ENCODE measurements at regions of chr17 and their contacts with region 1.

Region 1: DNA sequence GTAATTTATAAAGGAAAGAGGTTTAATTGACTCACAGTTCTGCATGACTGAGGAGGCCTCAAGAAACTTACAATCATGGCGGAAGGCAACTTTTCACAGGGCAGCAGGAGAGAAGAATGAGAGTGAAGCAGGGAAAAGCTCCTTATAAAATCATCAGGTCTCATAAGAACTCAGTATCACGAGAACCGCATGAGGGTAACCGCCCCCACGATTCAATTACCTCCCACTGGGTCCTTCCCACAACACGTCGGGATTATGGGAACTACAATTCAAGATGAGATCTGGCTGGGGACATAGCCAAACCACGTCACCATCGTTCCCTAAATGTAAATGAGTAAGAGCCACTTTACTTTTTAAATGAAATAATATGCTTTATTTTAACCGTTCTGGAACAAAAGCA is 89.9 kb upstream of the NACA2 start:
- DNase-seq: no peak
- ATAC-seq: no peak
- H3K4me3 ChIP-seq: no peak overlapping the region
- H3K27ac ChIP-seq: no peak overlapping the region
- H3K4me1 ChIP-seq: no peaks in the 10 kb centered on the region
- H3K27me3 ChIP-seq: no peaks in the 10 kb centered on the region
- CTCF ChIP-seq: no peak

Region 2: GRCh38 chr17:61486135-61487120 is 194.5 kb before region 1 on chr17:
- CTCF ChIA-PET with region 1: no interaction called
- POLR2A ChIA-PET with region 1: no interaction called
- in situ Hi-C with region 1: no loop called
- intact Hi-C with region 1: no loop called
- DNase-seq: no peak
- ATAC-seq: no peak
- H3K4me3 ChIP-seq: no peak overlapping the region
- H3K27ac ChIP-seq: 0 out of 2 replicates have a peak overlapping the region, but pooled peaks have one; percentile 17
- H3K4me1 ChIP-seq: no peaks in the 10 kb centered on the region; the same call in 1 of the 2 replicates
- H3K27me3 ChIP-seq: no peaks in the 10 kb centered on the region
- CTCF ChIP-seq: no peak

Region 3: DNA sequence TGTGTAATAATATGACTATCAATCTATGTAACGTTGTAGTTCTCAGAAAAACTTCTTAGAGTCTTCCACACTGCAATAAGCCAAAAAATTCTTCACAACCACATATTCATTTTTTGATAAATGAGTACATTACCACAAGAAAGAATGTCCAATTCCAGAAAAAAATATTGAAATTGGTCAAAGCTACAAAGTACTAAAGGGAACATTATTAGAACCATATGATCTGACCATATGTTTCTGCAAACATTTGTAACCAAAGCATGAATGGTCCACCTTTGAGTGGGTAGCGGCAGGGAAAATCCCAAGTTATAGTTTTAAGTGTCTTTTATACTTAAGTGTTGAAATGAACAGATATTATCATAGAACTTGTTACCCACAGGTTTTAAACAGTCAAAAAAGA is 18.2 kb before region 1 on chr17:
- CTCF ChIA-PET with region 1: no interaction called
- POLR2A ChIA-PET with region 1: no interaction called
- in situ Hi-C with region 1: no loop called
- intact Hi-C with region 1: no loop called
- DNase-seq: no peak
- ATAC-seq: no peak
- H3K4me3 ChIP-seq: no peak overlapping the region
- H3K27ac ChIP-seq: no peak overlapping the region
- H3K4me1 ChIP-seq: no peaks in the 10 kb centered on the region
- H3K27me3 ChIP-seq: peaks cover 9% of the 10 kb centered on the region; the same call in 1 of the 2 replicates
- CTCF ChIP-seq: no peak

Region 4: DNA sequence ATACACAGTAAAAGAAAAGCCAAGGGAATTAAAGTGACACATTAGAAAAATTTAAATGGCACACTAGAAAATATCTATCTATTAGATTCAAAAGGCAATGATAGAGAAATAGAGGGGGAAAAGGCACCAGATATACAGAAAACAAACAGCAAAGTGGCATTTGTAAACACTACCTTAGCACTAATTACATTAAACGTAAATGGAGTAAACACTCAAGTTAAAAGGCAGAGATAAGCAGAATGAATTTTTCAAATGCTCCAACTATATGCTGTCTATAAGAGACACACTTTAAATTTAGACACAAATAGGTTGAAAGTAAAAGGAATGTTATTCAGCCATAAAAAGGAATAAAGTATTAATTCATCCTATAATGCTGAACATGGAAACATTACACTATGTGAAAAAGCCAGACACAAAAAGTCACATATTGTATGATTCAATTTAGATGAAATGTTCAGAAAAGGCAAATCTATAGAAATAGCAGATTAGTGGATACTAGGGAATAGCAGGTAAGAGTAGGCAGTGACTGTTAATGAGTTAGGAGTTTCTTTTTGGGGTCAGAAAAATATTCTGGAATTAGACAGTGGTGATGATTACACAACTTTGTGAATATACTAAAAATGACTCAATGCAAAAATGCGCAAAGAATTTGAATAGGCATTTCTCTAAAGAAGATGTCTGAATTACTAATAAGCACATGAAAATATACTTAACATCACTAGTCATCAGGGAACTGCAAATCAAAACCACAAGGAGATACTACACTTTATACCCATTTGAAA is 90.0 kb after region 1 on chr17:
- CTCF ChIA-PET with region 1: no interaction called
- POLR2A ChIA-PET with region 1: no interaction called
- in situ Hi-C with region 1: no loop called
- intact Hi-C with region 1: no loop called
- DNase-seq: no peak
- ATAC-seq: no peak
- H3K4me3 ChIP-seq: no peak overlapping the region
- H3K27ac ChIP-seq: no peak overlapping the region
- H3K4me1 ChIP-seq: no peaks in the 10 kb centered on the region
- H3K27me3 ChIP-seq: no peaks in the 10 kb centered on the region
- CTCF ChIP-seq: no peak

Region 5: GRCh38 chr17:62319853-62320252 is 638.9 kb after region 1 on chr17:
- CTCF ChIA-PET with region 1: no interaction called
- POLR2A ChIA-PET with region 1: interaction called, 10 read pairs
- in situ Hi-C with region 1: no loop called
- intact Hi-C with region 1: no loop called
- DNase-seq: no peak
- ATAC-seq: no peak
- H3K4me3 ChIP-seq: no peak overlapping the region
- H3K27ac ChIP-seq: no peak overlapping the region
- H3K4me1 ChIP-seq: no peaks in the 10 kb centered on the region
- H3K27me3 ChIP-seq: peaks cover 36% of the 10 kb centered on the region
- CTCF ChIP-seq: no peak